Natural killer cell (primary cell): ENCODE measurements at regions of chr1 and their contacts with region 1.

Region 1: GRCh38 chr1:147172168-147172992 is at the start of gene PRKAB2:
- DNase-seq: peak; percentile 88 to 91
- ATAC-seq: peak; percentile 80 to 94 (median 88)
- H3K4me3 ChIP-seq: peak within 1 kb of the TSS; percentile 70
- H3K4me3 Mint-ChIP-seq: peak within 1 kb of the TSS; percentile 99
- H3K27ac ChIP-seq: peak within 1 kb of the TSS; percentile 76
- H3K27ac Mint-ChIP-seq: peak within 1 kb of the TSS; percentile 95 to 99
- H3K4me1 ChIP-seq: peaks cover 17% of the 10 kb centered on the region
- H3K4me1 Mint-ChIP-seq: peaks cover 30 to 47% of the 10 kb centered on the region in 2 donors
- H3K27me3 ChIP-seq: no peaks in the 10 kb centered on the region
- H3K27me3 Mint-ChIP-seq: no peaks in the 10 kb centered on the region
- CTCF ChIP-seq: peak; percentile 81
- total RNA-seq, gene PRKAB2: 15.1 to 19.1 (median 16.0) TPM

Region 2: GRCh38 chr1:147214842-147215539 is 42.6 kb after region 1 on chr1:
- intact Hi-C with region 1: no loop called
- DNase-seq: no peak
- ATAC-seq: no peak
- H3K4me3 ChIP-seq: no peak overlapping the region
- H3K4me3 Mint-ChIP-seq: no peak overlapping the region
- H3K27ac ChIP-seq: no peak overlapping the region
- H3K27ac Mint-ChIP-seq: no peak overlapping the region
- H3K4me1 ChIP-seq: no peaks in the 10 kb centered on the region
- H3K4me1 Mint-ChIP-seq: peaks cover 10 to 11% of the 10 kb centered on the region in 2 donors
- H3K27me3 ChIP-seq: no peaks in the 10 kb centered on the region
- H3K27me3 Mint-ChIP-seq: peaks cover 0 to 5% of the 10 kb centered on the region in 2 donors
- CTCF ChIP-seq: no peak

Region 3: GRCh38 chr1:147225193-147225730 is 52.9 kb after region 1 on chr1 and contains the start of gene FMO5:
- intact Hi-C with region 1: loop called (anchors 1 kb)
- DNase-seq: peak; percentile 32 to 72
- ATAC-seq: peak; percentile 90 to 94 (median 90)
- H3K4me3 ChIP-seq: peak within 1 kb of the TSS; percentile 55
- H3K4me3 Mint-ChIP-seq: peak within 1 kb of the TSS; percentile 98
- H3K27ac ChIP-seq: peak within 1 kb of the TSS; percentile 58
- H3K27ac Mint-ChIP-seq: peak within 1 kb of the TSS; percentile 85 to 90
- H3K4me1 ChIP-seq: peaks cover 9% of the 10 kb centered on the region
- H3K4me1 Mint-ChIP-seq: peaks cover 25 to 37% of the 10 kb centered on the region in 2 donors
- H3K27me3 ChIP-seq: no peaks in the 10 kb centered on the region
- H3K27me3 Mint-ChIP-seq: no peaks in the 10 kb centered on the region
- CTCF ChIP-seq: no peak
- total RNA-seq, gene FMO5: 5.8 to 6.0 (median 6.0) TPM

Region 4: GRCh38 chr1:147242439-147243227 is 70.3 kb after region 1 on chr1 and contains the start of gene CHD1L:
- intact Hi-C with region 1: loop called (anchors 1 kb)
- DNase-seq: peak; percentile 92 to 97
- ATAC-seq: peak; percentile 92 to 99 (median 93)
- H3K4me3 ChIP-seq: peak within 1 kb of the TSS; percentile 84
- H3K4me3 Mint-ChIP-seq: peak within 1 kb of the TSS; percentile 95
- H3K27ac ChIP-seq: peak within 1 kb of the TSS; percentile 53
- H3K27ac Mint-ChIP-seq: peak within 1 kb of the TSS; percentile 81 to 89
- H3K4me1 ChIP-seq: peaks cover 8% of the 10 kb centered on the region
- H3K4me1 Mint-ChIP-seq: peaks cover 30 to 42% of the 10 kb centered on the region in 2 donors
- H3K27me3 ChIP-seq: no peaks in the 10 kb centered on the region
- H3K27me3 Mint-ChIP-seq: peaks cover 0 to 8% of the 10 kb centered on the region in 2 donors
- CTCF ChIP-seq: peak; percentile 78
- total RNA-seq, gene CHD1L: 35.8 to 45.7 (median 44.0) TPM